ENCODE measurements at regions of chr19 and their contacts with region 1.

Region 1: GRCh38 chr19:49911381-49912145 is 14.9 kb upstream of the IL4I1 start:
- DNase-seq: peak; percentile 65
- H3K4me3 Mint-ChIP-seq: peak overlapping the region; percentile 17
- H3K27ac Mint-ChIP-seq: peak overlapping the region; percentile 90
- H3K4me1 Mint-ChIP-seq: peaks cover 48% of the 10 kb centered on the region
- H3K27me3 Mint-ChIP-seq: no peaks in the 10 kb centered on the region

Region 2: DNA sequence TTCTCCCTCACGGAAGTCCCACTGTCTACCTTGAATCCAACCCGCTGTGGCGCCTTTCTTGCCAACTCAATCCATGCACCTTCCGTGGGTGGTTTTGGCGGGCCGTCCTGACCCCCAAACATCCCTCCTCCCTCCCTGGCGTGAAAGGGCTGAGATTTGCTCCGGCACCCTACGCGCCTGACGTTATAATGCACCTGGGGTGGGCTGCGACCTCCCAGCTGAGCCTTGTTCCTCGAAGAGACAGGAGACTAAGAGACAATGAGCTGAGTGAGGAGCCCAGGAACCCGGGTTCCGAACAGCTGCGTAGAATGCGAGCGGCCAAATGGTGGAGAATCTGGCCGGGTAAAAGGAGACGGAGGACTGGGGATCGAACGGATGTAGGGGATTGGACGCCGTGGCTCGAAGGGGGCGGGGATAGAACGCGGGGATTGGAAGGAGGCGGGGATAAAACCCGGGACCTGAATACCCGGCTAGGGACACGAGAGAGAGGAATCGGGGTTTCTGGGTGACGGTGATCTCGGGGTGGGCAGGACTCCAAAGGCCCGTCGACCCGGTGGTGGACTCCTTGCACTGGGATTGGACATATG is 220.8 kb before region 1 on chr19 and contains the start of gene CPT1C:
- CTCF ChIA-PET with region 1: no interaction called
- intact Hi-C with region 1: no loop called
- DNase-seq: peak; percentile 70
- H3K4me3 Mint-ChIP-seq: peak within 1 kb of the TSS; percentile 70
- H3K27ac Mint-ChIP-seq: no peak within 1 kb of the TSS
- H3K4me1 Mint-ChIP-seq: peaks cover 27% of the 10 kb centered on the region
- H3K27me3 Mint-ChIP-seq: peaks cover 13% of the 10 kb centered on the region
- total RNA-seq, gene CPT1C: 0.32 to 0.48 TPM

Region 3: GRCh38 chr19:49877020-49877878 is 34.3 kb before region 1 on chr19 and contains the starts of genes AKT1S1 and TBC1D17:
- CTCF ChIA-PET with region 1: no interaction called
- intact Hi-C with region 1: no loop called
- DNase-seq: peak; percentile 99
- H3K4me3 Mint-ChIP-seq: no peak within 1 kb of the TSS
- H3K27ac Mint-ChIP-seq: no peak within 1 kb of the TSS
- H3K4me1 Mint-ChIP-seq: peaks cover 28% of the 10 kb centered on the region
- H3K27me3 Mint-ChIP-seq: no peaks in the 10 kb centered on the region
- total RNA-seq, gene AKT1S1: 13.3 to 14.2 TPM
- total RNA-seq, gene TBC1D17: 29.8 to 32.4 TPM

Region 4: DNA sequence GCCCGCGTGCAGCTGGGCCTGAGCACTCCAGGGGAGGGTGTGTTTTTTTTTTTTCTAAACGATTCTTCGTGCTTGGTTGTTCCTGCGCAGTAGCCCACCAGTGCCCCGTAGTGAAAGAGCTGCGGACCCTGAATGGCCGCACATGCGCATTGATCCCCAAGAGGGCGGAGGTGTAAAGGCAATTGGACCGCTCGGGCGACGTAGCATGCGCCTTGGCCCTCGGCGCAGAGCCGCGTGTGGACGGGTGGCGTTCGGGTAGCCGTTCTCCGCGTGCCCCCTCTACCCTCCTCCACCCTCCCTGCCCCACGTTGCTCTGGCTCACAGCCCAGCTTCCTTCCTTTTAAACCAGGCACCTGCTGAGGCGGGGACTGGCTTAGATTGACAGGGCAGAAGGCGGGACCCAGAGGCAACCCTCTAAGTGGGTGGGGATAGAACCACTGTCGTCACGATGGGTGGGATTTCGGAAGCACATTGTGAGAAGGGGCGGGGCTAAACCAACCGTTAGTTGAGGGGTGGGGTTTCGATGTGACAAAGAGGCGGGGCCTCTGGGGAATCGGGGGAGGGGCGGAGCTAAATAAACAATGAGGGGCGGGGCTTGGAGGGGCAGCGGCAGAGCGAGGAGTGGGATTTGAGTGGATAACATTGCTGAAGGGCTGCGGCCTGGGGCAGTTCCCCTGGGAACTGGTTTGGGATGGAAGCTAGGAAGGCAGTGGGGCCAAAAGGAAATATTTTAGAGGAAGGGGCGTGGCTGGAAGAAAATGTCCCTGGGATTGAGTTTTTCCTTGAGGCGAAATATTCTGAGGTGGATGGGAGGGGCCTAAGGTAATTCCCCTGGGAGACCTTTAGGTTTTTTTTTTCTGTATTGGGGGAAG is 18.3 kb after region 1 on chr19:
- CTCF ChIA-PET with region 1: interaction called, 4 read pairs
- intact Hi-C with region 1: loop called (anchors 1 kb)
- DNase-seq: peak; percentile 97
- H3K4me3 Mint-ChIP-seq: peak overlapping the region; percentile 89
- H3K27ac Mint-ChIP-seq: peak overlapping the region; percentile 100
- H3K4me1 Mint-ChIP-seq: peaks cover 60% of the 10 kb centered on the region
- H3K27me3 Mint-ChIP-seq: no peaks in the 10 kb centered on the region

Region 5: GRCh38 chr19:49954079-49954829 is 42.7 kb after region 1 on chr19:
- CTCF ChIA-PET with region 1: no interaction called
- intact Hi-C with region 1: no loop called
- DNase-seq: no peak
- H3K4me3 Mint-ChIP-seq: no peak overlapping the region
- H3K27ac Mint-ChIP-seq: no peak overlapping the region
- H3K4me1 Mint-ChIP-seq: peaks cover 5% of the 10 kb centered on the region
- H3K27me3 Mint-ChIP-seq: no peaks in the 10 kb centered on the region